Posterior cingulate gyrus (tissue), 11 donors: ENCODE measurements at regions of chr1 and their contacts with region 1.

Region 1: DNA sequence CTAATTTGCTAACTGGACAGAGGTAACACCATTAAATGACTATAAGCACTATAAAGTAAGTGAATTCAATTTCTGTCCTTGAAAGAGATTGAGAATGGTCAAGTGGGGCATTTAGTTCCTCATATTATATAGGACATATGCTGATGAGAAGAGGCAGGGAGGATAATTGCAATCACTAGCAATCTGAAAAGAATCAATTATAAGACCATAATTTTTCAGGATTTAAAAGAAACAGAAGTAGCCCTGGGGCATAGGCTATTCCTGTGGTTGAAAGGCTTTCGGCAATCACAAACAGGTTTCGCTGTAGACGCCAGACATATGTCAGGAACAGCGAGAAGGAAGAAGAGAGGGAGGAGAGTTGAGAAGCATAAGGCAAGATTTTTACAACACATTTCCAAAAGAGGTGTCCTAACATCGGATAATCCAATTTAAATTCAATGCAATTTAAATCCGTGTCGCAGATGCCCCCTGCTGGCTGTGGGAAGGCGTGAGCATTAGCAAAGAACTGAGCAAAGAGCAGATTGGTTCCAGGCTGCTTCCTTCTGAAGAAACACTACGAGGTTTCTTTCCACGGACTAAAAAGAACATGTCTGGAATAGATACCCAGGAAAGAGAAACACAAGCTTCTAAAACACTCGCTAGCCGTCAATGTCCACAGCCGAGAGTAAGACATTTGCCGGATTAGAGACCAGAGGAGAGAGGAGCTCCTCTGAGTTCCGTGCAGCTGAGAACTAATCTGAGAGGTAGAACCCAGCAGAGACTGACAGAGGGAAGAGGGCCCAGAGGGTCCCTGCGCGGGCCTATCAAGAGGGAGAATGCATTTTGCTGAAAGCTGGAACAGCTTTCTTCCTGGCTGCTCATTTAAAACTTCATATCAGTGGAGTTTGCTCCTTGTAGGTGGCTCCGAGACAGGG is 27.9 kb downstream of the RGS5 start:
- DNase-seq: peak; percentile 44 to 96 (median 71)

Region 2: GRCh38 chr1:162878000-162878596 is 296.7 kb before region 1 on chr1:
- intact Hi-C with region 1: loop called (anchors 2 kb)
- DNase-seq: peak in 9 of 10 donors; percentile 14 to 89 (median 63)

Region 3: GRCh38 chr1:163071405-163072255 is 103.2 kb before region 1 on chr1:
- intact Hi-C with region 1: loop called (anchors 2 kb)
- DNase-seq: peak in 8 of 10 donors; percentile 25 to 91 (median 60)

Region 4: DNA sequence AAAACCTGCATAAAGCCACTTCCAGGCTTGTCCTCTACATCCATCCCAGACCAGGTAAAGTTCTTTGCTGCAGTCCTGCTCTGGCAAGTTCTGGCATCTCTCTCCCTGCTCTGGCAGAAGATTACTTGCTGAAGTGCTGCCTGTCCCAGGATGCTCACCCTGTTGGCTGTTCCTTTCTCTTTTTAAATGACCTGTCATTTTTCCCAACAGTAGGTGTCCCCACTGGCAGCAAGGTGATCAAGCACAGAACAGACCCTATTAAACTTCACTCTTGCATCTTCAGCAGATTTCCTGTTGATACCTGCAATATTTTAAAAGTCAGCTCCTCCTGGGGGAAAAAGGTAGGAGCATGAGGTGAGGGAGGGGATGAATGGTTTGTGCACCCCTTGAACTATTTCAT is 1716.8 kb after region 1 on chr1:
- intact Hi-C with region 1: no loop called
- DNase-seq: no peak